ENCODE measurements at regions of chr5 and their contacts with region 1.

Region 1: GRCh38 chr5:170262061-170263045 is 29.6 kb downstream of the C5orf58 start:
- DNase-seq: peak in 8 of 10 donors; percentile 62 to 90 (median 77)
- ATAC-seq: peak; percentile 81 to 90
- H3K4me3 Mint-ChIP-seq: peak overlapping the region; percentile 29 to 80 (median 72)
- H3K27ac Mint-ChIP-seq: peak overlapping the region; percentile 84 to 99 (median 96)
- H3K4me1 Mint-ChIP-seq: peaks cover 48 to 95% (median 90%) of the 10 kb centered on the region in 4 donors
- H3K27me3 Mint-ChIP-seq: no peaks in the 10 kb centered on the region

Region 2: GRCh38 chr5:170120576-170120975 is 141.8 kb before region 1 on chr5:
- POLR2A ChIA-PET with region 1: no interaction called
- DNase-seq: no peak
- ATAC-seq: no peak
- H3K4me3 Mint-ChIP-seq: no peak overlapping the region
- H3K27ac Mint-ChIP-seq: no peak overlapping the region
- H3K4me1 Mint-ChIP-seq: no peaks in the 10 kb centered on the region
- H3K27me3 Mint-ChIP-seq: peaks cover 0 to 14% (median 4%) of the 10 kb centered on the region in 5 donors

Region 3: DNA sequence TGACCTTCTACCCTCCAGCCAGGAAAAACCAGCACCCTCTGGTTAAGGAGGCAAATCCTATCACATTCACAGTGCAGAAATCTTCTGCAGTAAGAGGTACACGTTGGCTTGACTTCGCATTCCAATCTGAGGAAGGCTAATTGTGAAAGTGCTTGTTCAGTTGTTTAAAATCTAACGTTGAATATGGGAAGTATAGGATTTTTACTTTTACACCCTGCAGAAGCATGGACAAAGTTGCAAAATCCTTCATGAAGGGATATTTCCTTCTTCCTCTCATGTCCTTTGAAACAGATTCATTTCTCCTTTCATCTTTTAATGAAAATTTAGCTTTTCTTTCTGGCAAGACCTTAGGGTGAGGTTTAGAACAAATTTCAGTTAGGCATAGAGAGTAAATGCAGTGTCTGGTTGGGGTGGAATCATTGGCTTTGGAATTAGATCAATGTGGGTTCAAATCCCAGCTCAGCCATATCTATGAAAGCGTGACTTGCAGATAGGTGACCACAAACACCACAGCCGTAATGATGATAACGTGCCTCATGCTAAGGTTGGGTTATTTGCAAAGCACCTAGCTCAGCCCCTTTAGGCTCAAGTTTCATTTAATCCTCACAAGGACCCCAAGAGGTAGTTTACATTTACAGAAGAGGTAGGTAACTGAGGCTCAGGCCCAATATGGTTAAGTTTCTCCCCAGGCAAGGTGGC is 71.8 kb before region 1 on chr5:
- POLR2A ChIA-PET with region 1: no interaction called
- DNase-seq: no peak
- ATAC-seq: no peak
- H3K4me3 Mint-ChIP-seq: no peak overlapping the region
- H3K27ac Mint-ChIP-seq: no peak overlapping the region
- H3K4me1 Mint-ChIP-seq: peaks cover 0 to 1% (median 0%) of the 10 kb centered on the region in 4 donors
- H3K27me3 Mint-ChIP-seq: peaks cover 0 to under 1% (median 0%) of the 10 kb centered on the region in 5 donors

Region 4: DNA sequence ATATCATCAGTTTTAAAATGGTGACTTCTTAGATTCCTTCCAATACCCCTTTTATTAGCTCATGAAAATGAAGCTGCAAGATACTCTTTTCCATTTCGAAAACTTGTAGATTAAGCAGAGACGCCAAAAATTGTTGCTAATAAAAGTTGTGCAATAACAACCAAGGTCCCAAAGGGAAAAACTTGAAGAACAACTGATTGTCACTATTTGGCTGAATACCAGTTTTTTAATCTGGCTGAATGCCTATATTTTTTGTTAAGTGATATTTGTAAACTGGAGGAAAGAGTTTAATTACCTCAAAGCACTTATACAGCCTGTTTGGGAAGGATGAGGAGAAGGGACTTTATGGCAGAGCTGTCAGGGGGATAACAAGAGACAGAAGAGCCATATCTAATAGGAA is 15.0 kb before region 1 on chr5:
- POLR2A ChIA-PET with region 1: interaction called, 19 read pairs
- DNase-seq: no peak
- ATAC-seq: no peak
- H3K4me3 Mint-ChIP-seq: peak overlapping the region in 1 of 10 donors; percentile 28
- H3K27ac Mint-ChIP-seq: peak overlapping the region in 5 of 10 donors; percentile 48 to 71 (median 59)
- H3K4me1 Mint-ChIP-seq: peaks cover 7 to 28% (median 16%) of the 10 kb centered on the region in 4 donors
- H3K27me3 Mint-ChIP-seq: no peaks in the 10 kb centered on the region

Region 5: DNA sequence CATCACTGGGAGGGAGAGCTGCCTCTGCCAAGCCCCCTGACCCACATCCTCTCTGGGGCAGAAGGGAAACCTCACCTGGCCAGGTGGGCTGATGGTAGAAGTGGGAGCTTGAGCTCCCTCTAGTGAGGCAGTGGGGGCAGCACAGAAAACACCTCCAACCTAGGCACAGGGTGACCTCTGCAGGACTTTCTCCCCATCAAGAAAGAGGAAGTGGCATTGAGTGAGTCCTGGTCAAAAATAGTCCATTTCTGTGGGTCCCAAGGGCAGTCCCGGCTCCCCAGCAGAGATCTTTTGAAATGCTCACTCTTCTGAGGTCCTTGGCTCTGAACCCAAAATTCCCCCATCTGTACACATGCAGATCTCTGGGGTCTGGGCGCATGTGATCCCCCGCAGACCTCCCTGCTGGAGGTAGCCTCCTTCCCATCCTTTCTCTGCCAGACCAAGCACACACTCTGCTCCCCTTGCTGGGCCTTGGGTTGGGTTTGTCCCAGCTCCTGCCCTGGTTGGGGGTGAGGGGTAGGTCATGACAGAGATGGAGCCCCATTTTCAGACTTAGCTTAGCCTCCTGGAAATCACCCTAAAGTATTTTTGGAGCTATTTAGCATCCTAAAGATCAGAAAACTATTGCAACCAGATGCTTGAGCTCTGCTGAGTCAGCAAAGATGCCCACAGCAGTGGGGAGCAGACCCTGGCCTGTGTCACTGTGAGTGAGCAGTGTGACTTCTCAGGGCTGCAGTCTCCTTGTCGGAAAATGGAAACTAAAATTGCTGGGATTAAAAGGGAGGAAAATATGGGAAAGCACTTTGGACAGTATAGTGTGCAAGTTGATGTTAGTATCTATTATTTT is 76.8 kb after region 1 on chr5:
- POLR2A ChIA-PET with region 1: interaction called, 45 read pairs
- DNase-seq: peak in 9 of 10 donors; percentile 52 to 84 (median 64)
- ATAC-seq: peak; percentile 70 to 74
- H3K4me3 Mint-ChIP-seq: peak overlapping the region in 5 of 10 donors; percentile 22 to 57 (median 32)
- H3K27ac Mint-ChIP-seq: peak overlapping the region in 9 of 10 donors; percentile 48 to 94 (median 90)
- H3K4me1 Mint-ChIP-seq: peaks cover 0 to 40% (median 35%) of the 10 kb centered on the region in 4 donors
- H3K27me3 Mint-ChIP-seq: no peaks in the 10 kb centered on the region